Activated CD4-positive, alpha-beta memory T cell treated with anti-CD3 and anti-CD28 coated beads for 36 hours (primary cell): ENCODE measurements at regions of chr18 and their contacts with region 1.

Region 1: GRCh38 chr18:812376-813171 is 532 bp upstream of the YES1 start:
- DNase-seq: peak; percentile 86
- H3K4me3 Mint-ChIP-seq: peak overlapping the region; percentile 87
- H3K27ac Mint-ChIP-seq: peak overlapping the region; percentile 99
- H3K4me1 Mint-ChIP-seq: peaks cover 57% of the 10 kb centered on the region
- H3K27me3 Mint-ChIP-seq: peaks cover 6% of the 10 kb centered on the region

Region 2: GRCh38 chr18:267688-268552 is 544.7 kb before region 1 on chr18 and contains the start of gene THOC1:
- CTCF ChIA-PET with region 1: no interaction called
- POLR2A ChIA-PET with region 1: no interaction called
- intact Hi-C with region 1: loop called (anchors 2 kb)
- DNase-seq: peak; percentile 98
- H3K4me3 Mint-ChIP-seq: peak within 1 kb of the TSS; percentile 99
- H3K27ac Mint-ChIP-seq: peak within 1 kb of the TSS; percentile 100
- H3K4me1 Mint-ChIP-seq: peaks cover 26% of the 10 kb centered on the region
- H3K27me3 Mint-ChIP-seq: no peaks in the 10 kb centered on the region
- total RNA-seq, gene THOC1: 54.0 to 57.9 TPM

Region 3: DNA sequence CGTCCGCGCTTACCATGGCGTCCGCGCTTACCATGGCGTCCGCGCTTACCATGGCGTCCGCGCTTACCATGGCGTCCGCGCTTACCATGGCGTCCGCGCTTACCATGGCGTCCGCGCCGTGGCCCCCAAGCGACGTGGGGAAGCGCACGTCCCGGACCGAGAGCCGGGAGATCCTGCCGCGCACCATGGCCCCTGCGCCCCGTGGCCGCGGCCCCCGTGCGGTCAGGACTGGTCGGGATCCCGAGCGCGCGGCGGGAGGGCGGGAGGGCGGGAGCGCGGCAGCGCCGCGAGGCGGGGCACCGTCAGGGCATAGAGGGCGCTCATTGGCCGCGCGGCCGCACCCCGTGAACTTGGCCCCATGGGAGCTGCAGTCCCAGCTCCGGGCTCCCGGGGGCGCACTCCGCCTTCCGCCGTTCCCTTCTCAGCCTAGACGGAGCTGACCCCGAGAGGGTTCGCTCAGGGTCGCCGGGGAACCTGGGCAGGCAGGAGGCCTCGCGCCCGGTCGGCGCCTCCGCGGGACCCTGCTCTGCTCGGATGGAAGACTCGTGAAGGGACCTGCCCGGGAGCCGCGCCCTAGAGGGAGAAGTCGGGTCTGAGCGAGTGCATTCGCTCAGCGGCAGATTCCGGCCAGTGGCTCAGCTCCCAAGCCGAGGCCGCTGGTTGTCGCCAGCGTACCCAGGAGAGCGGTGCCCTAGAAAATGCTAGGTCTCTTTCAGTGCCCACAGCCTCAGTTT is 100.0 kb before region 1 on chr18 and contains the start of gene ENOSF1:
- CTCF ChIA-PET with region 1: interaction called, 12 read pairs
- POLR2A ChIA-PET with region 1: interaction called, 5 read pairs
- intact Hi-C with region 1: loop called (anchors 1 kb)
- DNase-seq: peak; percentile 94
- H3K4me3 Mint-ChIP-seq: peak within 1 kb of the TSS; percentile 82
- H3K27ac Mint-ChIP-seq: peak within 1 kb of the TSS; percentile 88
- H3K4me1 Mint-ChIP-seq: peaks cover 54% of the 10 kb centered on the region
- H3K27me3 Mint-ChIP-seq: no peaks in the 10 kb centered on the region
- total RNA-seq, gene ENOSF1: 59.1 to 61.2 TPM

Region 4: DNA sequence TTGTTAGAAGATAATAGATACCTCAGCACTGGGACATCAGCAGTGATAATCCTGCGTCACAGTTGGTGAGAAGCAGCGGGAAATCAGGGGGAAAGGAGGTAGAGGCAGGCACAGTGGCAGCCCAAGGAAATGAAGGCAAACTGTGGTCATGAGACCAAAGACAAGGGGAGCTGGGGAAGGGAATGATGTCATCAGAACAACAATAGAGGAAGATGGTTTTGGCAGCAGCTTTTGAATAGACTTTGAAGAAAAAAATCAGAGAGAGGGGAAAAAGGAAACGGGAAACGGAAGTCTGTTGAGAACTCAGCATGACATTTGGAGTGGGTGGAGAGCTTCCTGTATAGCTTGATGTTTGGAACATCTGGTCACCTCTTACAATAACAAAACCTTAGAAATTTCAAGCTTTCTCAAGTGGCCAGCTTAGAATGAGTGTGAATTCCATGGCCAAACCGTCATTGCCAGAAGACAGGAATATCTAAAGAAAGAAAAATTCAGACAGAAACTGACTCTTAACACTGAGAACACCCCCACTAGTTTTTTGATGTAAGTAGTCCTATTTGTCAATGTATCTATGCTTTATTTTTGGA is 17.8 kb after region 1 on chr18:
- CTCF ChIA-PET with region 1: interaction called, 82 read pairs
- POLR2A ChIA-PET with region 1: interaction called, 27 read pairs
- intact Hi-C with region 1: loop called (anchors 1 kb)
- DNase-seq: peak; percentile 24
- H3K4me3 Mint-ChIP-seq: peak overlapping the region; percentile 2
- H3K27ac Mint-ChIP-seq: peak overlapping the region; percentile 44
- H3K4me1 Mint-ChIP-seq: peaks cover 19% of the 10 kb centered on the region
- H3K27me3 Mint-ChIP-seq: no peaks in the 10 kb centered on the region

Region 5: GRCh38 chr18:2636126-2636631 is 1823.6 kb after region 1 on chr18:
- CTCF ChIA-PET with region 1: no interaction called
- POLR2A ChIA-PET with region 1: no interaction called
- intact Hi-C with region 1: loop called (anchors 5 kb)
- DNase-seq: no peak
- H3K4me3 Mint-ChIP-seq: peak overlapping the region; percentile 59
- H3K27ac Mint-ChIP-seq: peak overlapping the region; percentile 92
- H3K4me1 Mint-ChIP-seq: peaks cover 84% of the 10 kb centered on the region
- H3K27me3 Mint-ChIP-seq: no peaks in the 10 kb centered on the region